CD4-positive, alpha-beta T cell (primary cell): ENCODE measurements at regions of chr19 and their contacts with region 1.

Region 1: DNA sequence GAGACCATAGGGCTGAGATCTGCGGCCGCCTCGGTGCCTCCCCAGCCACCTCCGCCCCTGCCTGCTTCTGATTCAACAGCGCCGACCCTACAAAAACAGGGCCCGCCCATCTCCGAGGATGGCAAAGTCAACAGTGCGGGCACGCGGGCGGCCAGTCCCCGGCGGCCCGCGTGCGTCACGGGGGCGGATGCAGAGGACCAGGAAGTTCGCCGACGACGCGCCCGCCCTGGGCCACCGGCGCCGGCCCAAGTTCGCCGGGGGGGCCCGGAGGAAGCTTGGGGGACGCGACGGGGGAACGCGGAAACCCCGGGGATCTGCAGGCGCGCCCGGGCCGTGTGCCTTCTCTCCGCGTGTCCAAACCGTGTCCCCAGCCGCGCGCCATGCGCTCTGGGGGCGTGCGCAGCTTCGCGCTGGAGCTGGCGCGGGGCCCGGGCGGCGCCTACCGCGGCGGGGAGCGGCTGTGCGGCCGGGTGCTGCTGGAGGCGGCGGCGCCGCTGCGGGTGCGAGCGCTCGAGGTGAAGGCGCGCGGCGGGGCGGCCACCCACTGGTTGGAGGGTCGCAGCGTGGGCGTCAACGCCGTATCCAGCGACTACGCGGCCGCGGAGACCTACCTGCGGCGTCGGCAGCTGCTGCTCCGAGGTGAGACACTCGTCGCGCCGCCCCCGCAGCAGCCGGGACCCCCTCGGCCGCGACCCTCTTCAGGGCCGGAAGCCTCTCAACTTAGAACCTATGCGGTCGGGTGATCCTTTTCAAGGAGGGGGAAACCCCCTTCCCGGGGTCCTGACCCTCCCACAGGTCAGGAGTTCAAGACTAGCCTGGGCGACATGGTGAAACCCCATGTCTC is 6.8 kb upstream of the ARRDC2 start:
- DNase-seq: peak; percentile 80 to 99 (median 94)
- ATAC-seq: peak; percentile 80
- H3K4me3 ChIP-seq: peak overlapping the region; percentile 92
- H3K4me3 Mint-ChIP-seq: peak overlapping the region; percentile 93
- H3K27ac ChIP-seq: peak overlapping the region; percentile 91 to 95
- H3K27ac Mint-ChIP-seq: peak overlapping the region; percentile 98
- H3K4me1 ChIP-seq: peaks cover 49% of the 10 kb centered on the region
- H3K4me1 Mint-ChIP-seq: peaks cover 28% of the 10 kb centered on the region
- H3K27me3 ChIP-seq: no peaks in the 10 kb centered on the region
- H3K27me3 Mint-ChIP-seq: peaks cover 4% of the 10 kb centered on the region
- CTCF ChIP-seq: no peak

Region 2: DNA sequence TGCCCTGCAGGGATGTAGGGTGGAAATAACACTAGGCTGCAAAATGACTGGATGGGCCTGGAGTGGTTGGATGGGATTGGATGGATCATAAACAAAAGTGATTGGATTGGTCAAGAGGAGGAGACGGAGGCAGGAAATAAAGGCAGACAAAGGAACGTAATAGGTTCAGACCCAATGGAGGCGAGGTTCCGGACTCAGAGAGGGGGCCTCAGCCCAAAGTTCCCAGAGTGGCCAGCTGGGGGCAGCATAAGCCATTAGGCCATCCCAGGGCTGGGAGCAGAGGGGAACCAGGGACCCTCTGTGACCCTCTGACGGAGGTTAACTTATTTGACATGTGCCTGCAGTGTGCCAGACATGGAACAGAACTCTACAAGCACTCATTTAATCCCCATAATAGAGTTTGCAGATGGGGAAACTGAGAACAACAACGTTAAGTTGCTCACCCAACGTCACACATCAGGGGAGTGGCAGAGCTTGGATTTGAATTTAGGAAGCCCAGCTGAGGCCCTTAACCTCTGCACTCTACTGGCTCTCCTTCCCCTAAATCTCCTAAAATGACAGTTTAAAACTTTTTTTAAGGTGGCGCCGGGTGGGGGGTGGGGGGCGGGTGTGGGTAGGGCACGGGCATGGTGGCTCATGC is 297.2 kb before region 1 on chr19:
- CTCF ChIA-PET with region 1: no interaction called
- POLR2A ChIA-PET with region 1: no interaction called
- intact Hi-C with region 1: loop called in 1 of 2 experiments (anchors 5 kb)
- DNase-seq: peak; percentile 63 to 80 (median 66)
- ATAC-seq: peak; percentile 99
- H3K4me3 ChIP-seq: no peak overlapping the region
- H3K4me3 Mint-ChIP-seq: no peak overlapping the region
- H3K27ac ChIP-seq: no peak overlapping the region
- H3K27ac Mint-ChIP-seq: no peak overlapping the region
- H3K4me1 ChIP-seq: peaks cover 4% of the 10 kb centered on the region
- H3K4me1 Mint-ChIP-seq: peaks cover 4% of the 10 kb centered on the region
- H3K27me3 ChIP-seq: peaks cover 2 to 4% of the 10 kb centered on the region in 2 experiments
- H3K27me3 Mint-ChIP-seq: peaks cover 6% of the 10 kb centered on the region
- CTCF ChIP-seq: peak; percentile 93

Region 3: DNA sequence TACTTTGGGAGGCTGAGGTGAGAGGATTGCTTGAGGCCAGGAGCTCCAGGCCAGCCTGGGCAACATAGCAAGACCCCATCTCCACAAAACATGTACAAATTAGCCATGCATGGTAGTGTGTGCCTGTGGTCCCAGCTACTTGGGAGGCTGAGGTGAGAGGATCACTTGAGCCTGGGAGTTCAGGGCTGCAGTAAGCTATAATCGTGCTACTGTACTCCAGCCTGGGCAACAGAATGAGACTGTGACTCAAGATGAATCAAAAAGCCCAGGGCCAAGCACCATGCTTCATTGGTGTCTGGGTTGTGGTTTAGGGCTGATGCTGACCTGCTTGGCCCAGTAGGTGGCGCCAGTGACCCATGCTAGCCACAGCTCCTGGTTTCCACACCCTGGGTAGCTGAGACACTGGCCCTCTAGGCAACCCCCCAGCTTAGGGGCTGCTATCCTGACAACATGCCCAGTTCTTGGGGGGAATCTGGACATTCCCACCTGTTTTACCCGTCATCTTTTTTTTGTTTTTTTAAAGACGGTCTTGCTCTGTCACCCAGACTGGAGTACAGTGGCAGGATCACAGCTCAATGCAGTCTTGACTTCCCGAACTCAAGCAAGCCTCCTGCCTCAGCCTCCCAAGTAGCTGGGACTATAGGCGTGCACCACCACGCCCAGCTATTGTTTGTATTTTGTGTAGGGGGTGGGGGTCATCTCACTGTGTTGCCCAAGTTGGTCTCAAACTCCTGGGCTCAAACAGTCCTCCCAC is 62.9 kb before region 1 on chr19:
- CTCF ChIA-PET with region 1: interaction called, 89 read pairs
- POLR2A ChIA-PET with region 1: interaction called, 25 read pairs
- intact Hi-C with region 1: loop called (anchors 1 kb)
- DNase-seq: peak; percentile 73 to 92 (median 82)
- ATAC-seq: peak; percentile 97
- H3K4me3 ChIP-seq: no peak overlapping the region
- H3K4me3 Mint-ChIP-seq: peak overlapping the region; percentile 60
- H3K27ac ChIP-seq: no peak overlapping the region
- H3K27ac Mint-ChIP-seq: no peak overlapping the region
- H3K4me1 ChIP-seq: peaks cover 9% of the 10 kb centered on the region
- H3K4me1 Mint-ChIP-seq: peaks cover 10% of the 10 kb centered on the region
- H3K27me3 ChIP-seq: no peaks in the 10 kb centered on the region
- H3K27me3 Mint-ChIP-seq: no peaks in the 10 kb centered on the region
- CTCF ChIP-seq: peak; percentile 89

Region 4: DNA sequence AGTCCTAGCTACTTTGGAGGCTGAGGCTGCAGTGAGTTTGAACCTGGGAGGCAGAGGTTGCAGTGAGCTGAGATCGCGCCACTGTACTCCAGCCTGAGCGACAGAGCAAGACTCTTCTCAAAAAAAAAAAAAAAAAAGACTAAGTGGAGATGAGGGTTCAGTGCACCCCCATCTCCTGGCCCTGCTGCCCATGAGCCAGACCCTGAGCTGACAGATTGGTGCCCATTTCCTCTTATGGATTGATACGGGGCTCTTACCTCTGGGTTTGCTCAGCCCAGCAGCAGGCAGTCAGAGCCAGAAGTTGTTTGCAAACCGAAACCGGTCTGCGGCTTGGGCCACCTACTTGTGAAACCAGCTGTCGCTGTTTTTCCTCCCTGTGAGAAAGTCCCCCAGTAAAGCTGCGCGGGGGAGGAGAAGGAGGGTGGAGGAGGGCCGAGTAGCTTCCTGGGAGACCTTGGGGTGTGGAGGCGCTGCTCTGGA is 43.7 kb after region 1 on chr19:
- CTCF ChIA-PET with region 1: interaction called, 12 read pairs
- POLR2A ChIA-PET with region 1: interaction called, 15 read pairs
- intact Hi-C with region 1: no loop called
- DNase-seq: peak; percentile 68 to 95 (median 79)
- ATAC-seq: peak; percentile 95
- H3K4me3 ChIP-seq: peak overlapping the region; percentile 53
- H3K4me3 Mint-ChIP-seq: peak overlapping the region; percentile 79
- H3K27ac ChIP-seq: peak overlapping the region; percentile 56 to 67
- H3K27ac Mint-ChIP-seq: peak overlapping the region; percentile 92
- H3K4me1 ChIP-seq: peaks cover 34% of the 10 kb centered on the region
- H3K4me1 Mint-ChIP-seq: peaks cover 36% of the 10 kb centered on the region
- H3K27me3 ChIP-seq: no peaks in the 10 kb centered on the region
- H3K27me3 Mint-ChIP-seq: no peaks in the 10 kb centered on the region
- CTCF ChIP-seq: no peak

Region 5: GRCh38 chr19:18097217-18097992 is 96.2 kb after region 1 on chr19 and contains the start of gene MAST3:
- CTCF ChIA-PET with region 1: no interaction called
- POLR2A ChIA-PET with region 1: interaction called, 19 read pairs
- intact Hi-C with region 1: no loop called
- DNase-seq: peak; percentile 81 to 96 (median 93)
- ATAC-seq: peak; percentile 98
- H3K4me3 ChIP-seq: peak within 1 kb of the TSS; percentile 59
- H3K4me3 Mint-ChIP-seq: peak within 1 kb of the TSS; percentile 91
- H3K27ac ChIP-seq: peak within 1 kb of the TSS in 1 of 2 donors; percentile 53
- H3K27ac Mint-ChIP-seq: peak within 1 kb of the TSS; percentile 67
- H3K4me1 ChIP-seq: peaks cover 35% of the 10 kb centered on the region
- H3K4me1 Mint-ChIP-seq: peaks cover 32% of the 10 kb centered on the region
- H3K27me3 ChIP-seq: no peaks in the 10 kb centered on the region
- H3K27me3 Mint-ChIP-seq: no peaks in the 10 kb centered on the region
- CTCF ChIP-seq: no peak
- total RNA-seq, gene MAST3: 16.1 to 16.4 TPM

Region 6: DNA sequence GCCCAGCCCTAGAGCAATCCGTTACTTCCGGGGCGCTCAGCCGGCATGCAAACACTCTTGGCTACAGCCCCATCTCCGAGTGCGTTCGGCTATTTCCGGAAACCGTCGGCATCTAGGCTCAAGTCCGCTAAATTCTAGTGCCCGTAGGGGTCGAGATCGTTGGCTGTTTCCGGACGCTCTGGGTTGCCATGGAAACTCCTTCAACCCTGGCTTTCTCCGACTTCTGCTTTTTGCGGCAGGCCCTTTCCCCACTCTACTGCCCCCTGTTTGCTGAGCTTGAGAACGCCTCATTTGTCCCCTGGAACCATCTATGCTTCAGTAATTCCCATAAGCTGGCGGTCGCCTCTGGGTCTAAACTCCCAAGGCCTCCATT is 151.3 kb after region 1 on chr19:
- CTCF ChIA-PET with region 1: interaction called, 3 read pairs
- POLR2A ChIA-PET with region 1: interaction called, 11 read pairs
- intact Hi-C with region 1: loop called in 1 of 2 experiments (anchors 5 kb)
- DNase-seq: peak; percentile 94 to 99 (median 98)
- ATAC-seq: peak; percentile 67
- H3K4me3 ChIP-seq: peak overlapping the region; percentile 78
- H3K4me3 Mint-ChIP-seq: peak overlapping the region; percentile 86
- H3K27ac ChIP-seq: peak overlapping the region; percentile 64 to 88
- H3K27ac Mint-ChIP-seq: peak overlapping the region; percentile 80
- H3K4me1 ChIP-seq: peaks cover 36% of the 10 kb centered on the region
- H3K4me1 Mint-ChIP-seq: peaks cover 23% of the 10 kb centered on the region
- H3K27me3 ChIP-seq: no peaks in the 10 kb centered on the region
- H3K27me3 Mint-ChIP-seq: no peaks in the 10 kb centered on the region
- CTCF ChIP-seq: peak; percentile 58

Region 7: DNA sequence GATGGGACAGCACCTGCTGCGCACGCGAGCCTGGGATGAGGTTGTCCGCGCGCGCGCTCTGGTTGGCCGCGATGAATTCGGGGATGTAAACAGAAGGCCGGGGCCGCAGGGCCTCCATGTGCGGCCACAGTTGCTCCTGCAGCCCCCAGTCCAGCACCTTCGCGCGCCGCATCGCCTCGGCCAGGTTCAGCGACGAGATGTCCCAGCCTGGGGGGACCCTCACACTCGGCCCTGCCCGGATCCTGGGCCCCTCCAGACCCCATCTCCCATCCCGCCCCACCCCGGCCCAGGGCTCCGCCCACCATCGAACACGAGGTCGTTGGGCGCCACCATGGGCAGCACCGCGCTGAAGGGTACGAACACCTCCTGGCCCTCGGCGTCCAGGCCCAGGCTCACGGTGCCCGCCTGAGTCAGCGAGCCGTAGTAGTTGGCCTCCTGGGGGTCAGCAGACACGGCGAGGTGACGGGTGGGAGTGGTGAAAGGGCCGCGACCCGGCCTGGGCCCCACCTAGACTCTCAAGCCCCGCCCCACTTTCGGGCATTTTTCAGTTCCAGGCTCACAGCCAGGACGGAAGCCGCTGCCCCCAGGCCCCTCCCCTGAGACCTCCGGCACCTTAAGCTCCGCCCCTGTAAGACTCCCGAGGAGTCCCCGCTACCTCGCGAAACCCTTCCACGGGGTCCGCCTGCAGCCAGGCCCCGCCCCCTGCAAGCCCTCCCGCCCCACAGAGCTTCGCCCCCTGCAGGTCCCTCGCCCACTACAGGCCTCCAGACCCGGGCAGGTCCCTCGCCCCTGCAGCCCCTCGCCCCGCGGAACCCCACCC is 435.7 kb after region 1 on chr19:
- CTCF ChIA-PET with region 1: no interaction called
- POLR2A ChIA-PET with region 1: no interaction called
- intact Hi-C with region 1: no loop called
- DNase-seq: peak; percentile 50 to 90 (median 74)
- ATAC-seq: peak; percentile 57
- H3K4me3 ChIP-seq: peak overlapping the region; percentile 68
- H3K4me3 Mint-ChIP-seq: peak overlapping the region; percentile 84
- H3K27ac ChIP-seq: no peak overlapping the region
- H3K27ac Mint-ChIP-seq: no peak overlapping the region
- H3K4me1 ChIP-seq: peaks cover 54% of the 10 kb centered on the region
- H3K4me1 Mint-ChIP-seq: peaks cover 34% of the 10 kb centered on the region
- H3K27me3 ChIP-seq: no peaks in the 10 kb centered on the region
- H3K27me3 Mint-ChIP-seq: no peaks in the 10 kb centered on the region
- CTCF ChIP-seq: no peak